ENCODE measurements at regions of chr5 and their contacts with region 1.

Region 1: GRCh38 chr5:122896598-122897282 is 51.3 kb downstream of the SNX24 start:
- DNase-seq: peak; percentile 34
- ATAC-seq: no peak
- H3K4me3 ChIP-seq: no peak overlapping the region
- H3K27ac ChIP-seq: no peak overlapping the region
- H3K4me1 ChIP-seq: no peaks in the 10 kb centered on the region
- H3K27me3 ChIP-seq: no peaks in the 10 kb centered on the region
- CTCF ChIP-seq: peak; percentile 56

Region 2: GRCh38 chr5:122515709-122516431 is 380.9 kb before region 1 on chr5:
- CTCF ChIA-PET with region 1: interaction called, 6 read pairs
- POLR2A ChIA-PET with region 1: no interaction called
- intact Hi-C with region 1: loop called (anchors 2 kb)
- DNase-seq: peak; percentile 64
- ATAC-seq: peak; percentile 89
- H3K4me3 ChIP-seq: no peak overlapping the region
- H3K27ac ChIP-seq: no peak overlapping the region
- H3K4me1 ChIP-seq: no peaks in the 10 kb centered on the region
- H3K27me3 ChIP-seq: no peaks in the 10 kb centered on the region
- CTCF ChIP-seq: peak; percentile 81

Region 3: DNA sequence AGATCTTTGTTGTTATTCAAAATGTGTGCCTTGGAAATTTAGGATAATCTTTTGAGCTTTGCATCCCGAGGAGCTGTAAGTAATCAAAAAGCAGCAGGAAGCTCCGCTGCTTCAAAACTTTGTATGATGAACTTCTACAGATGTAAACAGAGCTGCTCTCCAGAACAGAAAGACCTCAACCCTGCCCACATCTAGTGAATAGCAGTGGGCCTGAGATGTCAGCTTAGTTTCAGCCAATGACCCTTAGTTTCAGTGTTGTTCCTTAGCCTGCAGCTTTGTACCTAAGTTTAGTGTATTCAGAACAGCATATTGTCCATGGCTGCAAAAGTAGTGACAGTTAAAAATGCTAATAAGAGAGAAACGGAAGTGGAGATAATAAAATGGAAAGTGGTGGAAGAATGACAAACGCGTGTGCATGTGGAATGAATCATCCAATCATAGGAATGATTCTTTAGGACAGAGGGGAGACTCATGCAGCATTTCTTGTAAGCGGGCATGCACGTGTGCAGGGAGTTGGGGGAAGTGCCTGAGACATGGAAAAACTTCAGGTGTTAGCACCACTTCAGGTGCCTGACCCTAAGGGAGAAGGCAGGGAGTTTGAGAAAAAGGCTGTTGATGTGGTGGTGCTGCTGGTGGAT is 26.4 kb before region 1 on chr5:
- CTCF ChIA-PET with region 1: no interaction called
- POLR2A ChIA-PET with region 1: no interaction called
- intact Hi-C with region 1: no loop called
- DNase-seq: no peak
- ATAC-seq: no peak
- H3K4me3 ChIP-seq: no peak overlapping the region
- H3K27ac ChIP-seq: no peak overlapping the region
- H3K4me1 ChIP-seq: no peaks in the 10 kb centered on the region
- H3K27me3 ChIP-seq: no peaks in the 10 kb centered on the region
- CTCF ChIP-seq: no peak

Region 4: GRCh38 chr5:122924203-122924602 is 27.5 kb after region 1 on chr5:
- CTCF ChIA-PET with region 1: no interaction called
- POLR2A ChIA-PET with region 1: no interaction called
- intact Hi-C with region 1: no loop called
- DNase-seq: no peak
- ATAC-seq: no peak
- H3K4me3 ChIP-seq: no peak overlapping the region
- H3K27ac ChIP-seq: no peak overlapping the region
- H3K4me1 ChIP-seq: no peaks in the 10 kb centered on the region
- H3K27me3 ChIP-seq: no peaks in the 10 kb centered on the region
- CTCF ChIP-seq: no peak

Region 5: GRCh38 chr5:122999945-123000563 is 103.3 kb after region 1 on chr5:
- CTCF ChIA-PET with region 1: no interaction called
- POLR2A ChIA-PET with region 1: no interaction called
- intact Hi-C with region 1: loop called (anchors 1 kb)
- DNase-seq: peak; percentile 53
- ATAC-seq: no peak
- H3K4me3 ChIP-seq: no peak overlapping the region
- H3K27ac ChIP-seq: no peak overlapping the region
- H3K4me1 ChIP-seq: no peaks in the 10 kb centered on the region
- H3K27me3 ChIP-seq: no peaks in the 10 kb centered on the region
- CTCF ChIP-seq: peak; percentile 72

Region 6: DNA sequence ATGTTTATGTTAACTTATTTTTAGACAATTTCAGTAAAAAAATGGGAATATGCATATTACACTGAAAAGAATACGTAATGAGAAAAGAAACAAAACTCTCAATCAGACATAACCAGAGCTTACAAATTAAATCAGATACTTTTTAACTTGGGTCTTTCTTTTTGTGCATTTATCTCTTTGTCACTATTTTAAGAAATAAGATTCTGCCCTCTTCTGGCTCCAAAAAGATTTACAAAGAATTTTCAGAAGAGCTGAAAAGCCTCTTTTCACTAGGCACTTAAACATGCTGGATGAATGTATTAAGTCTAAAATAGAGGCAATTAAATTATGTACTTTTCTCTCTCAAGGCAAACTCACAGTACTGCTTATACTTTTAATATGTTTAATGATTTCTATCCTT is 471.0 kb after region 1 on chr5:
- CTCF ChIA-PET with region 1: no interaction called
- POLR2A ChIA-PET with region 1: no interaction called
- intact Hi-C with region 1: loop called (anchors 1 kb)
- DNase-seq: peak; percentile 31
- ATAC-seq: no peak
- H3K4me3 ChIP-seq: no peak overlapping the region
- H3K27ac ChIP-seq: no peak overlapping the region
- H3K4me1 ChIP-seq: no peaks in the 10 kb centered on the region
- H3K27me3 ChIP-seq: no peaks in the 10 kb centered on the region
- CTCF ChIP-seq: peak; percentile 61

Region 7: DNA sequence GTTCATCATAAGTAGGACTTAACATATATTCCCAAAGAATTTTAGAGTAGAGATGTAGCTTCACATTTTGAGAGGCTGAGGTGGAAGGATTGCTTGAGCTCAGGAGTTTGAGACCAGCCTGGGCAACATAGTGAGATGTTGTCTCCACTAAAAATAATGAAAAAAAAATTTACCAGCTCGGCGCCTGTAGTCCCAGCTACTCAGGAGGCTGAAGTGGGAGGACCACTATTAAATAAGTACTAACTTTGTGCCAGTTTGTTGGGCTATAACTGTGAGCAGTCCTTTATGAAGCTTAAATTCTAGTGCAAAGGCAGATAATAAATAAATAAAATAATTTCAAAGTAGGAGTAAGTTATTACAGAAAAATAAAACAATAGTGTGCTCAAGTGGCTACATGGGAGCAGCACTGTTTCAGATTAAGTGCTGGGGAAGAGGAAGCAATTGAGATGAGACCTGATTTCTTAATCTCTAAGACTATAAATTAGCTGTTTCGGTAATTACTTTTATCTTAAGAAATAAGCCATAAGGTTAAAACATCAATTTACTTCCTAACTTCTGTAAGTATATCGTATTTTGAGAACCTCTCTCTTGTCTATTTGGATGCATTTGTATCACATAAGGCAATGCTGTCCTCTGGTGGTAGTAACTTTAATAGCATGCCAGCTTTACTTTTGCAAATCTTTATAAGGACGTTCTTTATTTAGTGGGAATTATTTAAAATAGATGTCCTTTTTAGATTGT is 714.1 kb after region 1 on chr5:
- CTCF ChIA-PET with region 1: no interaction called
- POLR2A ChIA-PET with region 1: no interaction called
- intact Hi-C with region 1: loop called (anchors 10 kb)
- DNase-seq: peak; percentile 68
- ATAC-seq: peak; percentile 45
- H3K4me3 ChIP-seq: no peak overlapping the region
- H3K27ac ChIP-seq: no peak overlapping the region
- H3K4me1 ChIP-seq: no peaks in the 10 kb centered on the region
- H3K27me3 ChIP-seq: no peaks in the 10 kb centered on the region
- CTCF ChIP-seq: peak; percentile 86